ENCODE measurements at regions of chr1 and their contacts with region 1.

Region 1: GRCh38 chr1:112706908-112707663 is at the start of gene RHOC:
- DNase-seq: peak in 6 of 9 donors; percentile 27 to 79 (median 44)
- ATAC-seq: peak; percentile 75
- H3K4me3 ChIP-seq: peak within 1 kb of the TSS; percentile 41
- H3K4me3 Mint-ChIP-seq: peak within 1 kb of the TSS; percentile 74 to 90 (median 83)
- H3K27ac ChIP-seq: no peak within 1 kb of the TSS
- H3K27ac Mint-ChIP-seq: peak within 1 kb of the TSS; percentile 13 to 87 (median 73)
- H3K4me1 ChIP-seq: peaks cover 22% of the 10 kb centered on the region in 2 donors
- H3K4me1 Mint-ChIP-seq: peaks cover 15 to 52% (median 45%) of the 10 kb centered on the region in 7 donors
- H3K27me3 ChIP-seq: no peaks in the 10 kb centered on the region
- H3K27me3 Mint-ChIP-seq: peaks cover 0 to 27% (median 0%) of the 10 kb centered on the region in 5 donors
- total RNA-seq, gene RHOC: 0.57 to 89.1 (median 18.7) TPM

Region 2: GRCh38 chr1:112674439-112674985 is 32.6 kb before region 1 on chr1 and contains the start of gene MOV10:
- CTCF ChIA-PET with region 1: interaction called, 5 read pairs
- POLR2A ChIA-PET with region 1: interaction called, 10 read pairs
- intact Hi-C with region 1: loop called (anchors 1 kb)
- DNase-seq: peak; percentile 38 to 62 (median 59)
- ATAC-seq: peak; percentile 73
- H3K4me3 ChIP-seq: peak within 1 kb of the TSS; percentile 92
- H3K4me3 Mint-ChIP-seq: peak within 1 kb of the TSS; percentile 94 to 99 (median 97)
- H3K27ac ChIP-seq: peak within 1 kb of the TSS; percentile 88
- H3K27ac Mint-ChIP-seq: peak within 1 kb of the TSS; percentile 90 to 98 (median 95)
- H3K4me1 ChIP-seq: peaks cover 17 to 19% of the 10 kb centered on the region in 2 donors
- H3K4me1 Mint-ChIP-seq: peaks cover 37 to 62% (median 58%) of the 10 kb centered on the region in 7 donors
- H3K27me3 ChIP-seq: no peaks in the 10 kb centered on the region
- H3K27me3 Mint-ChIP-seq: no peaks in the 10 kb centered on the region
- total RNA-seq, gene MOV10: 85.5 to 126 (median 90.1) TPM

Region 3: GRCh38 chr1:112754116-112754628 is 47.1 kb after region 1 on chr1:
- CTCF ChIA-PET with region 1: no interaction called
- POLR2A ChIA-PET with region 1: no interaction called
- intact Hi-C with region 1: no loop called
- DNase-seq: no peak
- ATAC-seq: no peak
- H3K4me3 ChIP-seq: no peak overlapping the region
- H3K4me3 Mint-ChIP-seq: no peak overlapping the region
- H3K27ac ChIP-seq: no peak overlapping the region
- H3K27ac Mint-ChIP-seq: no peak overlapping the region
- H3K4me1 ChIP-seq: no peaks in the 10 kb centered on the region
- H3K4me1 Mint-ChIP-seq: peaks cover 0 to 2% (median 0%) of the 10 kb centered on the region in 7 donors
- H3K27me3 ChIP-seq: no peaks in the 10 kb centered on the region
- H3K27me3 Mint-ChIP-seq: peaks cover 13 to 54% (median 53%) of the 10 kb centered on the region in 5 donors

Region 4: DNA sequence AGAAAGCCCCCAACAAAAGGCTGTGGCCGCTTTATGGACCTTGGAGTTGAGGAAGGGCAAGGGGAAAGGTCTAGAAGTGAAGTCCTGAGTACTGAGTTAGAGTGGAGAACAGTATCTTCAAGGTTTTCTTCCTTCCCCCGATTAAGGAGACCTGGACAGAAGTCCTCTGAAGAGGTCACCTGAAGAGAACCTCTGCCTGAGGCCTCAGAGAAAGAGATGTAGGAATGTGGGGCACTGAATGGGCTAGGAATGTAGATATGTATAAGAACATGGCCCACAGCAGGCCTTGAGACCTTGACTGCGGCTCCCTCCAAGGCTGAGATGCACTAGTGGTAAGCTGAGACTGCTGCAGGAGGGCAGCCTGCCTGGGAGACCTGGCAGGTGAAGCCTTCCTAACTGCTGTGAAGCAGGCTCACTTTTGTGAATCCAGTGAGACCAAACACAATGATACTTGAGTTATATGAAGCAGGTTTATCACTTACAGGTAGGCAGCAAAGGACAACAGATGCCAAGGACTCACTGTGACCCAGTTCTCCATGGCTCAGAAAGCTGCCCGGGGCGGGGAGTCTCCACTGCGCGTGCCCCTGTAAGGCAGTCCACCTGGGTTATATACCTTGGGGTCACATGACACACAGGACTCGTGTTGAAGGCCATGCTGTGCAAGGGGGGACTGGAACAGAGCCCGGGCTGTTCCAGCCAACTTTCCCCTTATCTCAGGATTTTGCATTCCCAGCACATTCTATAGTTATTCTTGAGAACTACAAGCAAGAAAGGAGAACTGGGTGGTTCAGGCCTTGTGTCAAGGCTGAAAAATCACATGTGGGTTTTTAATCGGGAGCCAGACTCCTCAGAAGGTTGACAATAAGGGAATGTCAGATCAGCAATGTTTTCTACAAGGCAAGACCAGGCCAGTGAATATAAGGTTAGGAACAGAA is 86.8 kb after region 1 on chr1:
- CTCF ChIA-PET with region 1: no interaction called
- POLR2A ChIA-PET with region 1: no interaction called
- intact Hi-C with region 1: no loop called
- DNase-seq: no peak
- ATAC-seq: no peak
- H3K4me3 ChIP-seq: no peak overlapping the region
- H3K4me3 Mint-ChIP-seq: no peak overlapping the region
- H3K27ac ChIP-seq: no peak overlapping the region
- H3K27ac Mint-ChIP-seq: no peak overlapping the region
- H3K4me1 ChIP-seq: no peaks in the 10 kb centered on the region
- H3K4me1 Mint-ChIP-seq: no peaks in the 10 kb centered on the region
- H3K27me3 ChIP-seq: no peaks in the 10 kb centered on the region
- H3K27me3 Mint-ChIP-seq: peaks cover 0 to 6% (median 5%) of the 10 kb centered on the region in 5 donors

Measured in naive thymus-derived CD4-positive, alpha-beta T cell (primary cell).